MCF 10A (cell line): ENCODE measurements at regions of chr5 and their contacts with region 1.

Region 1: GRCh38 chr5:100777680-100778281 is 125.3 kb downstream of the ST8SIA4 start:
- DNase-seq: peak; percentile 95
- H3K4me3 Mint-ChIP-seq: peak overlapping the region; percentile 55
- H3K27ac Mint-ChIP-seq: peak overlapping the region; percentile 86
- H3K4me1 Mint-ChIP-seq: peaks cover 19% of the 10 kb centered on the region
- H3K27me3 Mint-ChIP-seq: no peaks in the 10 kb centered on the region
- CTCF ChIP-seq: no peak

Region 2: DNA sequence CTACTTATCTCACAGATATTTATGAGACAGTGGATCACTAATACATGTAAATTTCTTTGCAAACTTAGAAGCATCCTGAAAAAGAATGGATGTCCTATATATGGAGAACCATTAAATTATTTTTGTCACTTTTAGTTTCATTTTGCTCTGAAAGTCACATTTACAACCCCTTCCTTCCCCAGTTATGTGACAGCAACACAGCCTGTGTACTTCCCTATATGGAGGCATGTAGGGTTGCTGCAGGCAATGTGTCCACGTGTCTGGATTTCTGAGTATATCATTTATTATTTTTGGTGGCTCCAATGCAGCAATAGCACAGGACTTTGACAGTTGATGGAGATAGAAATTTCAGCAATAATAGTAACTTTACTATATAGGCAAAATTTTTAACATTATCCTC is 31.1 kb before region 1 on chr5:
- CTCF ChIA-PET with region 1: no interaction called
- POLR2A ChIA-PET with region 1: no interaction called
- intact Hi-C with region 1: no loop called
- DNase-seq: no peak
- H3K4me3 Mint-ChIP-seq: no peak overlapping the region
- H3K27ac Mint-ChIP-seq: no peak overlapping the region
- H3K4me1 Mint-ChIP-seq: no peaks in the 10 kb centered on the region
- H3K27me3 Mint-ChIP-seq: no peaks in the 10 kb centered on the region
- CTCF ChIP-seq: no peak

Region 3: GRCh38 chr5:100797861-100798260 is 20.1 kb after region 1 on chr5:
- CTCF ChIA-PET with region 1: no interaction called
- POLR2A ChIA-PET with region 1: no interaction called
- intact Hi-C with region 1: no loop called
- DNase-seq: peak; percentile 45
- H3K4me3 Mint-ChIP-seq: no peak overlapping the region
- H3K27ac Mint-ChIP-seq: no peak overlapping the region
- H3K4me1 Mint-ChIP-seq: peaks cover 6% of the 10 kb centered on the region
- H3K27me3 Mint-ChIP-seq: no peaks in the 10 kb centered on the region
- CTCF ChIP-seq: no peak

Region 4: DNA sequence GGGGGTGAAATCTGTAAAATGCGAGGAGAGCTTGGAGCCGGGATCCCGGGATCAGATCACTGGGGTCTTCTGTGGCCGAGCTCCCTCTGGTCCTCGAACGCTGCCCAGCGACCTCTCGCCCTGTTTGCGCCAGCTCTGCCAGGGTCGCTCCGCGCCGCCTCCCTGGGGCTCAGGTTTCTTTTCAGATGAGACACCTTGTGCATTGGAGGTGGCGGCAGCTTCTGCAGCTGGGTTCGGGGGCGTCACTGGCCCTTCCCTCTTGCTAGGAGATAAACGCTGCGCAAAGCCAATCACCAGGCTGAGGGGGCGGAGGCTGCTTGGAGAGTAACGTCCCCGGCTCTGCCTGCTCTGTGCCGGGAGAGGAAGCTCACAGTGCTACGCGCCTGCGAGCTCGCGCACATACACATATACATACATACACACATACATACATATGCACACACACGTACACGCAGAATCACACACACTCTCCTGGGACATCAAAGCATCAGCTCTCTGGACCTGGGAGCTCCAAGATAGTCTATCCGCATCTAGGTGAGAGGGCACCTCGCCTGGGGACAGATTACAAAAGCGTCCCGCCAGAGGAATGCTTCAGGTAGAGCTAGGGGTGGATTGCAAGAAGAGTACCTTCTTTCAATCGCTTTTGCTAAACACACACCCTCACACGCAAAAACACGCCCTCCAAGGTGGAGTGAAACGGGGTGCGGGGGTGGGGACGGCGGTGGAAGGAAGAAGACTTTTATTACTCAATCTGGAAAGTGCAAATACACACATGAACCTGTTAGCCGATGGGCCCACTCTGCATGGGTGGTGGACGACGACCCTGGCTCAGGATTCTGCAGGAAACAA is 125.5 kb after region 1 on chr5 and contains the start of gene ST8SIA4:
- CTCF ChIA-PET with region 1: interaction called, 4 read pairs
- POLR2A ChIA-PET with region 1: no interaction called
- intact Hi-C with region 1: loop called (anchors 10 kb)
- DNase-seq: peak; percentile 79
- H3K4me3 Mint-ChIP-seq: peak within 1 kb of the TSS; percentile 61
- H3K27ac Mint-ChIP-seq: no peak within 1 kb of the TSS
- H3K4me1 Mint-ChIP-seq: peaks cover 16% of the 10 kb centered on the region
- H3K27me3 Mint-ChIP-seq: no peaks in the 10 kb centered on the region
- CTCF ChIP-seq: no peak
- total RNA-seq, gene ST8SIA4: 0.26 and 0.54 TPM in 2 replicates

Region 5: DNA sequence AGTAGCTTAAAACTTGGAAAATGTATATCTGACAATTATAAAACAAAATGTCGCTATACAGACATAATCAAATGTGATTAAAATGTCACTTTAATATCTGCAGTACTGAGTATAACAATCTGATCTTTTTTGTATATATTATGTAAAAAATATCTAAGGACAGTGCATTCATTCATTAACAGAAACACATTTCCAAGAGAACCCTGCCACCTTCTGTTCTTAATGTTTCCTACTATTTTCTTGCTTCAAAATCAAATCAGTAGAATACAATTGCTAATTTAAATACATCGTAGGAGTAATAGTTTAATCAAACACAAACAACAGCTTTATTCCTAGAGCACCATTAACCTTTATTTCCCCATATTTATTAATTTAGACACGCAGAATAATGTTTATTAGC is 267.9 kb after region 1 on chr5:
- CTCF ChIA-PET with region 1: no interaction called
- POLR2A ChIA-PET with region 1: no interaction called
- intact Hi-C with region 1: loop called (anchors 5 kb)
- DNase-seq: peak; percentile 9
- H3K4me3 Mint-ChIP-seq: no peak overlapping the region
- H3K27ac Mint-ChIP-seq: no peak overlapping the region
- H3K4me1 Mint-ChIP-seq: no peaks in the 10 kb centered on the region
- H3K27me3 Mint-ChIP-seq: no peaks in the 10 kb centered on the region
- CTCF ChIP-seq: peak; percentile 30

Region 6: DNA sequence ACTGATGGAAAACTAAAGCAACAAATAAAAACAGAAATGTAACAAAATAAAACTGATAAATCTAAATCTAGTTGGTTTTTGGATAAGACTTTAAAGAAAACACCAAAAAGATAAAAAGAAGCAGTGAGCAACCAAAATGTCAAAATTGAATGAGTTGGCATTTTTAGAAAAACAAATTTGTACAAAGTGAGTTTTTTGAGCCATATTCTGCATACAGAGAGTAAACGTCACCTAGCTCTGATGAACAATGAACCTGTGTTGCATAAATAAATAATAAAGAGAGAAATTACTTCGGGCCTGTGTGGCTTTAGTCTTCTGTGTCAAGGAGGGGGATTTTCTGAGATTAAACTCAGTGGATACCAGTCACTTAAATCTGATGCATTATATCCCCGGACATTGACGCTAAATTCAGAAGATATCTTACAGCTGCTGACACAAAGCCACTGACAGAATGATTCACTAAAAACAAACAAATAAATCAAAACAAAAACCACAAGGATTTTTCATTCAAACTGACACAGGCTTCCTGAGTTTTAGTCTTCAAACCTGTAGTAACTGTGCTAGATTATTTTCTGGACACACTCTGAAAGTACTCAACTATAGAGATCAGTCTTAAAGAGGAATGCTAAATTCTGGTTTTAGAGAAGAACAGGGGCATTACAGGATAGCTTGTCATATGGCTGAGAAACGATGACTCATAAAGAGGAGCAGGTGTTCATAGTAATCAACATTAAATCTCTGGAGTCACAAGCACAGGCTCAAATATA is 528.8 kb after region 1 on chr5:
- CTCF ChIA-PET with region 1: no interaction called
- POLR2A ChIA-PET with region 1: no interaction called
- intact Hi-C with region 1: no loop called
- DNase-seq: peak; percentile 8
- H3K4me3 Mint-ChIP-seq: no peak overlapping the region
- H3K27ac Mint-ChIP-seq: no peak overlapping the region
- H3K4me1 Mint-ChIP-seq: peaks cover 8% of the 10 kb centered on the region
- H3K27me3 Mint-ChIP-seq: no peaks in the 10 kb centered on the region
- CTCF ChIP-seq: no peak